K562 (cell line): ENCODE measurements at regions of chr14 and their contacts with region 1.

Region 1: GRCh38 chr14:75307700-75308379 is 29.2 kb downstream of the FOS start:
- DNase-seq: peak; percentile 52 to 84 (median 58)
- ATAC-seq: peak; percentile 94
- H3K4me3 ChIP-seq: no peak overlapping the region
- H3K27ac ChIP-seq: no peak overlapping the region
- H3K4me1 ChIP-seq: no peaks in the 10 kb centered on the region; a peak in 3 of 5 replicates
- H3K27me3 ChIP-seq: peaks cover 0 to 3% of the 10 kb centered on the region in 2 experiments; a peak in 2 of 5 replicates
- CTCF ChIP-seq: peak; percentile 84 to 95 (median 89)
- EP300 ChIP-seq: 0 out of 2 replicates have a peak, but pooled peaks have one; percentile 9
- POLR2A ChIP-seq: no peak
- RAD21 ChIP-seq: peak; percentile 89 to 92

Region 2: GRCh38 chr14:74893614-74894091 is 414.2 kb before region 1 on chr14:
- CTCF ChIA-PET with region 1: no interaction called
- POLR2A ChIA-PET with region 1: no interaction called
- in situ Hi-C with region 1: no loop called
- intact Hi-C with region 1: no loop called
- DNase-seq: no peak
- ATAC-seq: no peak
- H3K4me3 ChIP-seq: no peak overlapping the region
- H3K27ac ChIP-seq: no peak overlapping the region
- H3K4me1 ChIP-seq: peaks cover 5 to 6% of the 10 kb centered on the region in 2 experiments; a peak in 4 of 5 replicates
- H3K27me3 ChIP-seq: no peaks in the 10 kb centered on the region
- CTCF ChIP-seq: no peak
- EP300 ChIP-seq: no peak
- POLR2A ChIP-seq: no peak
- RAD21 ChIP-seq: no peak

Region 3: GRCh38 chr14:74913986-74914573 is 393.8 kb before region 1 on chr14:
- CTCF ChIA-PET with region 1: interaction called, 3 read pairs
- POLR2A ChIA-PET with region 1: no interaction called
- in situ Hi-C with region 1: no loop called
- intact Hi-C with region 1: loop called (anchors 10 kb)
- DNase-seq: peak in 2 of 4 experiments; percentile 47 to 64
- ATAC-seq: peak; percentile 89
- H3K4me3 ChIP-seq: no peak overlapping the region
- H3K27ac ChIP-seq: no peak overlapping the region
- H3K4me1 ChIP-seq: peaks cover 2 to 22% of the 10 kb centered on the region in 2 experiments; a peak in 2 of 5 replicates
- H3K27me3 ChIP-seq: no peaks in the 10 kb centered on the region
- CTCF ChIP-seq: peak; percentile 68 to 72 (median 69)
- EP300 ChIP-seq: no peak
- POLR2A ChIP-seq: no peak
- RAD21 ChIP-seq: peak; percentile 55 to 82

Region 4: DNA sequence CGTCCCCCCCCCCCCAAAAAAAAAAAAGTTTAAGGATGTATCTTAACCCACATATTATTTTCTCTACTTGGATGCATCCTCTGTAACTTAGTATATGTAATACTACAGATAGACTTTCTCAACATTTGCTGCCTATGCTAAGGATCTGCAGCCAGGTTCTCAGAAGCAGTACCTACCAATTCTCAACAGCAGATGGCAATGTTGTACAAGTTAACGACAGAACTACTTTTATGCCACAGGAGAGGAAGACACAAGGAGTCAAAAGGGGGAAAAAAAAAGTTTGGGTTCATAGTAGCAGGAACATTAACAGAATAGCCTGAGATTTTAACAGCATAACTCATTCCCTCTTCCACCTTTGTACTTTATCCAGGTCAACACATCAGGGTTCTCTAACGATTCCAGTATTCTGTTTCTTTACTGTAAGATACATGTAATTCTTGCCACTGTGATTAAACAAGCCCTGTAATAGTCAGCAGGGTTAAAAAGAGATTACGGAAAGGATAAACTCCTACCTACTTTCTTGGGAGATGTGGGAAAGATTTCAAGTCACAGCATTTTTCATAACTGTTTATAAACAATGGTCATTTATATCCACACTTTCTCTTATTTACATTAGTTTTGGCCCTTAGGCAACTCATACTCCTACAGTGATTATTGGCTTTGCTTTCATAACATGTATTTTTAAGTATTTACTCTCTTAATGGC is 175.3 kb before region 1 on chr14:
- CTCF ChIA-PET with region 1: interaction called, 40 read pairs
- POLR2A ChIA-PET with region 1: interaction called, 4 read pairs
- in situ Hi-C with region 1: loop called (anchors 5 kb)
- intact Hi-C with region 1: loop called (anchors 2 kb)
- DNase-seq: peak; percentile 22 to 76 (median 30)
- ATAC-seq: peak; percentile 91
- H3K4me3 ChIP-seq: no peak overlapping the region
- H3K27ac ChIP-seq: no peak overlapping the region
- H3K4me1 ChIP-seq: peaks cover 0 to 4% of the 10 kb centered on the region in 2 experiments; a peak in 2 of 5 replicates
- H3K27me3 ChIP-seq: no peaks in the 10 kb centered on the region
- CTCF ChIP-seq: peak; percentile 56 to 74 (median 60); a peak in 5 of 6 replicates
- EP300 ChIP-seq: no peak
- POLR2A ChIP-seq: no peak
- RAD21 ChIP-seq: peak; percentile 85 to 89

Region 5: DNA sequence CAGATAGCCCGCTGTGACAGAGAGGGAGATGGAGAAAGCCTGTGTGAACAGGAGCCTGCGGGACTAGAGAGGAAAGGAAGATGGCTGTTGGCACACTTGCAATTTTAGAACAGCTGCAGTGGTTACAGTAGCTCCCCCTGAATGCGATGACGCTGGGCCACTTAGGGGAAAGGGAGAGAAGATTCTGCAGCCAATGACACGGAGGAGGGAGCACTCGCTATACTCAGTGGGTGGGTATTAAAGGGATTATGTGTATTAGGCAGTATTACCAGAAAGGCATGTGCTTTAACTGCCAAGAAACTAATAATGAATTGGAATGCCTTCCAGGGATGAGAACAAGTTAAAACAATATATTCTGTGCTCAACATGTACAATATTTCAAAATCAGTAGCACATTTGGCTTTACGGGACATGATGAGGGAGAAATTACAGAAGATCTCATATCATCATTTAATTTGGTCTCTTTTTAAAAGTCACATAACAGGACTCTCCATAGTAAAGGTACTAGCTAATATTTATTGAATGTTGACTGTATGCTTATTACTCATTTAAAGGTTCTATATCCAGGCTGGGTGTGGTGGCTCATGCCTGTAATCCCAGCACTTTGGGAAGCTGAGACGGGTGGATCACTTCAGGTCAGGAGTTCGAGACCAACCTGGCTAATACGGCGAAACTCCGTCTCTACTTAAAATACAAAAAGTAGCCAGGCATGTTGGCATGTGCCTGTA is 65.1 kb before region 1 on chr14:
- CTCF ChIA-PET with region 1: no interaction called
- POLR2A ChIA-PET with region 1: no interaction called
- in situ Hi-C with region 1: no loop called
- intact Hi-C with region 1: no loop called
- DNase-seq: no peak
- ATAC-seq: no peak
- H3K4me3 ChIP-seq: no peak overlapping the region
- H3K27ac ChIP-seq: no peak overlapping the region
- H3K4me1 ChIP-seq: 0 out of 5 replicates have a peak, but pooled peaks cover 0 to 4% of the 10 kb centered on the region in 2 experiments
- H3K27me3 ChIP-seq: no peaks in the 10 kb centered on the region
- CTCF ChIP-seq: no peak
- EP300 ChIP-seq: no peak
- POLR2A ChIP-seq: no peak
- RAD21 ChIP-seq: no peak

Region 6: DNA sequence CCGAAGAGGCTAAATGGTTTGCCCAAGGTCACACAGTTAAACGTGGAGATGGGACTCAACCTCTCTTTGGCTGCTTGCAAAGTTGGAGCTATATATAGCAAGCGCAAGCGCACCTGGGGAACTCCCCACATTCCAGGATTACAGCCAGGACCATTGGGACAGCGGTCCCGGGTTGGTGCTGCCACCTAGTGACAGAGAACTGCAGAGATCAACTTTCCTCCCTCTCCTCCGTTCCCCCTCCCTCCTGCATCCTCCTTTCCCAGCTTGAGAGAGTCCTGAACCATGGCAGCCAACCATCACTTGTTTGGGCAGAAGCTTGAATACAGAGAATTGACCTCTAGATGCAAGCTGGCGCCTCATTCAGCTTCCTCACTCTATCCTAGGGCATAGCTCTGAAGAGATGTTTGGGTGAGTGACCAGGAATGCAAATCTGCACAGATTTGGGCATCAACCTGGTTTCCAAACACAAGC is 253.2 kb after region 1 on chr14:
- CTCF ChIA-PET with region 1: interaction called, 17 read pairs
- POLR2A ChIA-PET with region 1: no interaction called
- in situ Hi-C with region 1: loop called (anchors 10 kb)
- intact Hi-C with region 1: loop called (anchors 2 kb)
- DNase-seq: peak; percentile 62 to 81 (median 74)
- ATAC-seq: peak; percentile 88
- H3K4me3 ChIP-seq: no peak overlapping the region
- H3K27ac ChIP-seq: no peak overlapping the region
- H3K4me1 ChIP-seq: no peaks in the 10 kb centered on the region
- H3K27me3 ChIP-seq: peaks cover 0 to 14% of the 10 kb centered on the region in 2 experiments; a peak in 2 of 5 replicates
- CTCF ChIP-seq: peak; percentile 68 to 82 (median 81)
- EP300 ChIP-seq: no peak
- POLR2A ChIP-seq: no peak
- RAD21 ChIP-seq: peak; percentile 72 to 86